Left ventricle myocardium superior (tissue), 1 donor: ENCODE measurements at regions of chr1 and their contacts with region 1.

Region 1: DNA sequence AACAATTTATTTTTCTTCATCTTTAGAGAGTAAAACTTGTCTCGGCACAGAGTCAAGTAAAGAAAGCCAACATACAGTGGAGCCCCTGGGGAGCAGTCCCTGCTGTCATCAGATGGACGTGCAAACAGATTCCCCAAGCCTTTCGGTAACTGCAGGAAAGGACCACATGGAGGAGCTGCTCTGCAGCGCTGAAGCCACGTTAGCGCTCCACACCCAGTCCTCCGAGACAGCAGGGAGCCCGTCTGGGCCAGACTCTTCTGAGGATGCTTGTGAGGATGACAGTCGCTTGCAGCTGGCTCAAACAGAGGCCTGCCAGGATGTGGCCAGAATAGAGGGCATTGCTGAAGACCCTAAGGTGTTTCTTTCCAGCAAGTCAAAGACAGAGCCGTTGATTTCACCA is 77.1 kb upstream of the SCCPDH start:
- DNase-seq: peak; percentile 79
- ATAC-seq: peak; percentile 97

Region 2: DNA sequence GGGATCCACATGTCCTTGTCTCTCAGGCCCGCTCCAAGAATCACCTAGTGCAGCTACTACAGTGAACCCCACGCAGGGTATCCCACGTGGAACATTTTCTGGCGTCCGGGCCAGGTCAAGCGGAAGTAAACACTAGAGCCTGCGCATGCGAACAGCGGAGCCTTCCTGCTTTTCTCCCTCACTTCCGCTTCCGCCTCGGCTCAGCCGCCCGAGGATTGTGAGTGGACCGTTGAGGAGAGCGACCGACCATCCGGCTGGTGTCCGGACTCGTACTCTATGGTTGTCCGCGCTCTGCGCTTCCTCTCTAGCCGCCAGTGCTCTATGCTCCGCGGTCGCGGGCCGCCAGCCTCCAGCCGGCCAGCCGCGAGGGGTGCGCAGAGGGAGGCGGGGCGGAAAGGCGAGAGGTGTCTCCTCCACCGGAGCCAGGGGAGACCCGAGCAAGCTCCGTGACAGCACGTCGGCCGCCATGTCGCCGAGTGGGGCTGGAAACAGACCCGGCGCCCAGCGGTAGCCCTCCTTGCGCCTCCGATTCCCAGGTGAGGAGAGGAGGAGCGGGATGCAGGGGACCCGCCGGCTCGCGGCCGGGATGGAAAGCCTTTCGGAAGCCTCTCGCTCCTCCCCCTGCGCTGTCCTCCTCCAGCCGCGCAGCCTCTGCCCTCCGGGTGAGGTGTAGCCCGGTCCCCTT is 80.8 kb before region 1 on chr1 and contains the starts of genes CNST and TFB2M:
- intact Hi-C with region 1: loop called (anchors 10 kb)
- DNase-seq: peak; percentile 98
- ATAC-seq: peak; percentile 98
- total RNA-seq, gene CNST: 20.2 TPM
- total RNA-seq, gene TFB2M: 17.4 TPM

Region 3: DNA sequence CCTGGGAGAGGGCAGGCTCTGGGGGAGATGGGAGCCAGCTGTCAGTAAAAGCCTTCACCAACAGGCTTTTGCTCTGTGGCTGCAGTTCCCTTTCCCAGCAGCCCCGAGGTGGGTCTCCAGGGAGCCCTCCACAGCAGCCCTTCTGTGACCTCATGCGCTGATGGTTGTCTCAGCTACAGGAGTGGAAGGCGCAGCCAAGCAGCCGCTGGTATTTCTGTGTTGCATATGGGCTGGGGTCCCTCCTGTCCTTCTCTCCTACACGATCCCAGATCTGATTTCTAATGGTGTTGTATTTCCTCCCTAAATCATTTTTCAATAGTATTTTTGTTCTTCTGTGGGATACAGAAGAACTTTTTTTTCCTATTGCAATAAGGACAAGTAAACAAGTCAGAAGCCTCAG is 34.8 kb after region 1 on chr1:
- intact Hi-C with region 1: no loop called
- DNase-seq: peak; percentile 80
- ATAC-seq: peak; percentile 84

Region 4: DNA sequence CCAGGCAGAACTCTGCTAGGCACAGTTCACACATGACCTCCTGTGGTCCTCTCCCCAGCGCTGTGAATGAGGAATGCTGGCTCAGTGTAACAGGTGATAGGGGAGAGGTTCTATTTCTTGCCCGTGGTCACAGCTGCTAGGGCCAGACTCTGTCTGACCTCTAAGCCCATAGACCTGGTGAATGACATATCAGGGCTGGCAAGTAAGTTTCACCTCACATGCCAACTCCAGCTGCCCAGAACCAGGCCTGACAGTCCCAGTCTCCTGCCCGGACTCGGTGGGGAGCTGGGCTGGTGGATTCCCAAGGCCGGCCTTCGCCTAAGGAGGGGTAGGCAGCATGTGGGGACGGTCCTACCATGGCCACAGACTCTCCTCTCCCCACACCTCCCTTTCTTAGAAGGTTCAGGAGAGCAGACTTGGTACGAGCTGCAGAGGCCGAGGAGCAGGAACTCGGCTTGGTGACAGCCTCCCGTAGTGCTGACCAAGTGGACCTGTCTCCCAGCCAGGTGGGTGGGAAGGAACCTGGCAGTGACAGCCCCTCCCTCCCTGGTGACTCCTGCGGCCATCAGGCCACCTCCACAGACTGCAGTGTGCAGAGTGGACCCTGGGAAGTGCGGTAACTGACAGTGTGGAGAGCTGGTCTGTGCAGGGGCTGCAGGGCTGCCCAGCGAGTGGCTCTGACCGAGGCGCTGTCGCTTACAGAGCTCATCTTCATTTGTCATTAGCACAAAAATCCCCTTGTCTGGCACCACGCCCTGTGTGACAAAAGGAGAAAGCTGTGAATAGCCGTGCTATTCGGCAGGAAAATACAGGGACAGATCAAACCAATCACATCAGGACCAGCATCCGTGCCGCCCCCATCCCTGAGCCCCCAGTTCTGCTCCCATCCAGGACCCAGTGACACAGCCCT is 151.7 kb after region 1 on chr1:
- intact Hi-C with region 1: no loop called
- DNase-seq: peak; percentile 58
- ATAC-seq: peak; percentile 86